ENCODE measurements at regions of chr7 and their contacts with region 1.

Region 1: GRCh38 chr7:44921607-44922359 is 36.5 kb upstream of the PURB start:
- DNase-seq: peak; percentile 96

Region 2: DNA sequence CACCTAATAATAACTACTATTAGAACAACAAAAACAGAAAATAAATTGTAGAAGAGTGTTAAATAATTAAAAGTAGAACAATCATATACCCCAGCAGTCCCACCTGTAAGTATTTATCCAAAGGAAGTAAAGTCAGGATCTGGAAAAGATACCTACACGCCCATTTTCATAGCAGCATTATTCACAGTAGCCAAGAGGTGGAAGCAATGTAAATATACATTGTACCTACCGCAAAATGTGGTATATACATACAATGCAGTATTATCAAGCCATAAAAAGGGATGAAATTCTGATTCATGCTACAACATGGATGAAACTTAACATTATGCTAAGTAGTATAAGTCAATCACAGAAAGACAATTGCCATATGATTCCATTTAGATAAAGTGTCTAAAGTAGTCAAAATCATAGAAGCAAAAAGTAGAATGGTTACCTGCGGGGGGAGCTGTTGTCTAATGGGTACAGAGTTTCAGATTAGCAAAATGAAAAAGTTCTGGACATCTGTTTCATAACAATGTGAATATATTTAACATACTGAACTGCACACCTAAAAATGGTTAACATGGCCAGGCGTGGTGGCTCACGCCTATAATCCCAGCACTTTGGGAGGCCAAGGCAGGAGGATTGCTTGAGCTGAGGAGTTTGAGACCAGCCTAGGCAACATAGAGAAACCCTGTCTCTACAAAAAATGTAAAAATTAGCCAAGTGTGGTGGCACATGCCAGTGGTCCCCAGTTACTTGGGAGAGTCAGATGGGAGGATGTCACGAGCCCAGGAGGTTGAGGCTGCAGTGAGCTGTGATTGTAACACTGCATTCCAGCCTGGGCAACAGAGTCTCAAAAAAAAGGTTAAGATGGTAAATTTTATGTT is 333.7 kb before region 1 on chr7:
- intact Hi-C with region 1: loop called (anchors 5 kb)
- DNase-seq: no peak

Region 3: DNA sequence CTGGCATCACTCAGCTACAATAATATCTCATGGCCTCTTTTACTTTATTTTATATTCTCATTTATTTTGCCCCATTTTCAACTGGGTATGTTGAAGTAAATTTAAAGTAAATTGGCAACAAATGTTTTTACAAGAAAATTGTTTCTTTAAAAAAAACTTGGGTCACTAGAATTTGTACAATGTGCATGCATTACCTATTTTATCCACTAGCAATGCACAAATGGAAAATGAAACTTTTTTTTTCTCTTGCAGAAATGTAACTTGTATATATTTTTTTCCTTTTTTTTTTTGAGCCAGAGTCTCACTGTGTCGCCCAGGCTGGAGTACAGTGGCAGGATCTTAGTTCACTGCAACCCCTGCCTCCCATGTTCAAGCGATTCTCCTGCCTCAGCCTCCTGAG is 63.6 kb before region 1 on chr7:
- intact Hi-C with region 1: loop called (anchors 2 kb)
- DNase-seq: no peak

Region 4: DNA sequence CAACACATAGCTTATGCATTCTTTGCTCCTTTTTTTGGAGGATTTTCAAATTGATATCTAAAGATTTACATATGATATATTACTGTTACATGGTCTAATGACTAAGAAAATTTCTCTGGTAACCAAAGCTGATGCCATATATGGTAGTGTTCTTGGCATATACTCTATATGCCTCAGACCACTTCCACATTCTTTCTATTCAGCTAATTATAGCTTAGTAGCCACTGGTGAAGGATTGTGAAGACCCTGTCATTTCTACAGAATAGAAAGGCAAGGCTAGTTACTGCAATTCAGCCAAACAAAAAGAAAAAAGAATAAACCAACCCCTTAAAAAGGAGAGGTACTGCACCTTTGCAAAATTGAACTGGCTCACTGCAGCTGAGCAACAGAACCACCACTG is 40.2 kb before region 1 on chr7:
- intact Hi-C with region 1: no loop called
- DNase-seq: no peak

Region 5: DNA sequence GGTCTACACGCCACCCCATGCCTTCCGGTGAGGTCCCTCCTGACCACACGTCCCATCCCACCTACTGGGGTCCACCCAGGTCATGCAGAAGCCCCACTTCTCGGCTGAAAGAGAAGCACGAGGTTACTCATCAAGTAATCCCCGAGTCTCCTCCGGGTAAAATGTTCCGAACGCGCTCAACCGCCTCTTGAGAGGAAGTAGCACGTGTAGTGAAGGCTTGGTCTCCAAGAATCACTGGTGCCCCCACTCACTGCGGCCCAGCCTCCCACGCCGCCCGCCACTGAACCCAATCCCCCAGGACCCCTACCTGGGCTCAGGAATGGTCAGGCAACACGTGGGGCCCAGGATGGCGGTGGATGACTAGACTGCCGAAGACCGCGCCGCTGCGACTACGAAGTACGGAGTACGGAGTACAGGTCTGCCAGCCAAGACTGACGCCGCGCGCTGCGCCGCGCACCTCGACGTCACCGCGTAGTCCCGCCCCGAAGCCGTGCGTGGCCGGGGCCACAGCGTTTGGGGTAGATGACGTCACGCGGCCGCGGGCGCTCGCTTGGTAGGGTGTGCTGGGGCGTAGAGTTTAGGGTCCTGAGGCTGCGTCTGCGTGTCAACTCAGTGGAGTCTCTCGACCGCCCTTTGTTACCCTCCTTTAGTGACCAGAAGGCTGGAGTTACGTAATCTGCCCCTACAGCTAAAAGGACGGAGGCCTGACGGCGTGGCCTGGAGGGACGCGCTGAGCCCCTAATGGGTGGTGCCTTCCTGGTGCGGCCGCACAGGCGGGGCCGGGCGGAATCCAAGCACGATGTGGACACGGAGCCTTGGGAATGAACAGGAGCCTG is 64.7 kb after region 1 on chr7:
- intact Hi-C with region 1: no loop called
- DNase-seq: peak; percentile 98